ENCODE measurements at regions of chr2 and their contacts with region 1.

Region 1: GRCh38 chr2:241102239-241102803 is at the start of gene MTERF4:
- DNase-seq: no peak
- ATAC-seq: peak; percentile 82
- H3K4me3 ChIP-seq: peak within 1 kb of the TSS; percentile 80
- H3K27ac ChIP-seq: peak within 1 kb of the TSS; percentile 90
- H3K4me1 ChIP-seq: peaks cover 31% of the 10 kb centered on the region
- H3K27me3 ChIP-seq: no peaks in the 10 kb centered on the region
- CTCF ChIP-seq: no peak
- EP300 ChIP-seq: peak; percentile 41 to 56; a peak in 1 of 4 replicates
- POLR2A ChIP-seq: peak; percentile 94
- RAD21 ChIP-seq: peak; percentile 16; the same call in 1 of the 2 replicates
- polyA plus RNA-seq, gene MTERF4: 36.7 to 45.0 TPM

Region 2: DNA sequence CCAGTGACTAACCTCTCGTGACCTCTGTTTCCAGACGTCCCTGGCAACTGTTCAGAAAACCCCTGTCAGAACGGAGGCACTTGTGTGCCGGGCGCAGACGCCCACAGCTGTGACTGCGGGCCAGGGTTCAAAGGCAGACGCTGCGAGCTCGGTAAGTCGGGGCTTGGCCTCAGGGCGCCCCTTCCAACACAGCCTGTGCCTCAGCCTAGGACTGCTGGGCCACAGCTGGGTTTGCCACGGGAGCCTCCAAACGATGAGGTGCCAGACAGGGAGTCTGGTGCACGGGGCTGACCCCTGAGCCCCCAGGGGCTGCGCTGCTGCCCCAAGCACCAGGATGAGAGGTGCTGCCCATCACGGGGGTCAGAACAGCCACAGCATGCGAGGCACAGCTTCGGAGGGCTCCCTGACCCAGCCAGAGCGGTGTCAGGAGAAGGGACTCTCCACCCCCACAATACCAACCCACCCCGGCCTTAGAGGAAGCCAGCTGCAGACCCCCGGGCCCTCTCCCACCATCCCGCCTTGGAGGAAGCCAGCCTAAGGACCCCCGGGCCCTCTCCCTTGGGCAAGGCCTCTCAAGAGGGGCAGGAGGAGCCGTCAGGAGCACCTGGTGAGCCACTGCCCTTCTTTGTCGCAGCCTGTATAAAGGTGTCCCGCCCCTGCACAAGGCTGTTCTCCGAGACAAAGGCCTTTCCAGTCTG is 20.5 kb before region 1 on chr2:
- CTCF ChIA-PET with region 1: interaction called, 14 read pairs
- POLR2A ChIA-PET with region 1: interaction called, 3 read pairs
- RAD21 ChIA-PET with region 1: interaction called, 3 read pairs
- SMC1A ChIA-PET with region 1: interaction called, 12 read pairs
- in situ Hi-C with region 1: no loop called
- intact Hi-C with region 1: no loop called
- DNase-seq: no peak
- ATAC-seq: no peak
- H3K4me3 ChIP-seq: no peak overlapping the region
- H3K27ac ChIP-seq: no peak overlapping the region
- H3K4me1 ChIP-seq: no peaks in the 10 kb centered on the region; the same call in 1 of the 2 replicates
- H3K27me3 ChIP-seq: no peaks in the 10 kb centered on the region
- CTCF ChIP-seq: no peak
- EP300 ChIP-seq: no peak
- POLR2A ChIP-seq: 0 out of 2 replicates have a peak, but pooled peaks have one; percentile 16
- RAD21 ChIP-seq: no peak

Region 3: DNA sequence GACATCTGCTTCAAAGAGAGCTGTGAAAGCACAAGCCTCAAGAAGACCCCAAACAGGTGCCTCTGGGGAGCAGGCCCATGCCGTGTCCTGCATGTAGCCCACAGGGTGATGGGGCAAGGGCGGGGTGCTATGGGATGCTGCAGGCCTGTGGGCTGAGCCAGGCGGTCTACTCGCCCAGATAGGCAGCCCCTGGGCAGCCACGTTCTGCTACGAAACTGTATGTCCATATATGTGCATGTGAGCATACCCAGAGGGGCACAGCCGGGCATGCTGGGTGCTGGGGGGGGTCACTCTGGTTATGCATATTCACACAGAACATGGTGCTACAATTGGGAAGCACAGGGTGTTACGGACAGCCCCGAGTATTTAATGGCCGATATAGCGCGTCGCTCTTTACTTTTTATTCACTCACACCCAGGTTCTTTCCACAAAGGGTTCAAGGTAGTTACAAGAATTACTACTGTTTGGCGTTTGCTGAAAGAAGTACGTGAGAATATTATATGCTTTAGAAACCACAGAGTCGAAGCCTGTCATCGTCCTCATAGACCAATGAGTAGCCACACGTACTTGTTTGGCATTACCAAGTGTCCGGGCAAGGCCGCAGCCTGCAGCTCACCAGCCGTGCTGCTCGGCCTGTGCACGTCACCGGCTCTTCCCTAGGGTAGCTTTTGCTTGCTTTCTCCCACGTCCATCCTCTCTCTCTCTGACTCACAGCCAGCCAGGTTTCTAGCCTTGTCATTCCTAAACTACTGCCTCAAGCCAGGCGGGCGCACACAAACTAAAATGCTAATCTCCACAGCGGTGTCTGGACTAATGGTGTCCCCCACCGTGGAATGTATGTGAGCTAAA is 14.7 kb before region 1 on chr2:
- CTCF ChIA-PET with region 1: interaction called, 4 read pairs
- POLR2A ChIA-PET with region 1: interaction called, 22 read pairs
- RAD21 ChIA-PET with region 1: interaction called, 7 read pairs
- SMC1A ChIA-PET with region 1: interaction called, 12 read pairs
- in situ Hi-C with region 1: no loop called
- intact Hi-C with region 1: loop called (anchors 1 kb)
- DNase-seq: peak; percentile 78
- ATAC-seq: peak; percentile 88
- H3K4me3 ChIP-seq: no peak overlapping the region
- H3K27ac ChIP-seq: peak overlapping the region; percentile 88
- H3K4me1 ChIP-seq: peaks cover 19% of the 10 kb centered on the region
- H3K27me3 ChIP-seq: no peaks in the 10 kb centered on the region
- CTCF ChIP-seq: no peak
- EP300 ChIP-seq: peak; percentile 78 to 92; a peak in 3 of 4 replicates
- POLR2A ChIP-seq: no peak; the same call in 1 of the 2 replicates
- RAD21 ChIP-seq: no peak

Region 4: GRCh38 chr2:241123816-241124536 is 21.7 kb after region 1 on chr2:
- CTCF ChIA-PET with region 1: interaction called, 3 read pairs
- POLR2A ChIA-PET with region 1: interaction called, 10 read pairs
- RAD21 ChIA-PET with region 1: interaction called, 11 read pairs
- SMC1A ChIA-PET with region 1: interaction called, 4 read pairs
- in situ Hi-C with region 1: no loop called
- intact Hi-C with region 1: loop called (anchors 1 kb)
- DNase-seq: no peak
- ATAC-seq: no peak
- H3K4me3 ChIP-seq: no peak overlapping the region
- H3K27ac ChIP-seq: no peak overlapping the region
- H3K4me1 ChIP-seq: peaks cover 35% of the 10 kb centered on the region
- H3K27me3 ChIP-seq: no peaks in the 10 kb centered on the region
- CTCF ChIP-seq: no peak
- EP300 ChIP-seq: no peak
- POLR2A ChIP-seq: no peak
- RAD21 ChIP-seq: no peak

Region 5: GRCh38 chr2:241129086-241129871 is 27.0 kb after region 1 on chr2:
- CTCF ChIA-PET with region 1: interaction called, 3 read pairs
- POLR2A ChIA-PET with region 1: interaction called, 10 read pairs
- RAD21 ChIA-PET with region 1: interaction called, 11 read pairs
- SMC1A ChIA-PET with region 1: interaction called, 4 read pairs
- in situ Hi-C with region 1: no loop called
- intact Hi-C with region 1: loop called (anchors 1 kb)
- DNase-seq: no peak
- ATAC-seq: peak; percentile 32
- H3K4me3 ChIP-seq: no peak overlapping the region
- H3K27ac ChIP-seq: peak overlapping the region; percentile 97
- H3K4me1 ChIP-seq: peaks cover 43% of the 10 kb centered on the region
- H3K27me3 ChIP-seq: no peaks in the 10 kb centered on the region
- CTCF ChIP-seq: no peak
- EP300 ChIP-seq: no peak
- POLR2A ChIP-seq: no peak; the same call in 1 of the 2 replicates
- RAD21 ChIP-seq: no peak

Region 6: DNA sequence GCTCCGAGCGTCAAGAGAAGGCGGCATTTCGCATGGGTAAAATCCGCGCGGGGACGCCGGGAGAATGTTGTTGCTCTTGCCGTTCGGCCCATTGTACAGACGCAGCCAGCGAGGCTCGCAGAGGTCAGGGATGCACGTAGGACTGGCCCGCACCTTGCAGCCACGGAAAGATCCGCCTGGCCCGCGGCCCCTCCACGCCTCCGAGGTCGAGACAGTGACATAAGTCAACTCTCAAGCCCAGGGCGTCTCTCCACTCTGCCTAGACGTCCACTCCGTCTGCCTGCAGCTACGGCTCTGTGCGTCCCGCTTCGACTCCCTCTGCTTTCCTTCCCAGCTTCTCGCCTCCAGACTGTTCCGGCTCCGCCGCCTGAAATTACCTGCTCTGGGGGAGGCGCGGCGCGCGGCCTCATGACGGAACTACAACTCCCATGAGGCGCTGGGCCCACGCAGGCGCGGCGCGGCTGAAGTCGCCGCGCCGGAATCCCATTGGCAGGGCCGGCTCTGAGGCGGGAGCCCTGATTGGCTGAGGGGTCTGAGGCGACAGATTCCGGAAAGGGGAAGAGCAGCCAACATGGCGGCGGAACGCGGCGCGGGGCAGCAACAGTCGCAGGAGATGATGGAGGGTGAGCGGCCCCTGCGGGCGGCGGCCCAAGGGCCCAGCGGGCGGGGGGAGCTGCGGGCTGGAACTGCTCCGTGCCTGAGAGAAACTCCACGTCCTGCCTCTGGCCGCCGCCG is 47.8 kb after region 1 on chr2 and contains the start of gene PPP1R7:
- CTCF ChIA-PET with region 1: interaction called, 4 read pairs
- POLR2A ChIA-PET with region 1: interaction called, 14 read pairs
- RAD21 ChIA-PET with region 1: interaction called, 62 read pairs
- SMC1A ChIA-PET with region 1: interaction called, 25 read pairs
- in situ Hi-C with region 1: no loop called
- intact Hi-C with region 1: loop called (anchors 5 kb)
- DNase-seq: peak; percentile 76
- ATAC-seq: peak; percentile 88
- H3K4me3 ChIP-seq: peak within 1 kb of the TSS; percentile 74
- H3K27ac ChIP-seq: peak within 1 kb of the TSS; percentile 65
- H3K4me1 ChIP-seq: peaks cover 23% of the 10 kb centered on the region
- H3K27me3 ChIP-seq: no peaks in the 10 kb centered on the region
- CTCF ChIP-seq: peak; percentile 33 to 57 (median 42); a peak in 5 of 6 replicates
- EP300 ChIP-seq: no peak
- POLR2A ChIP-seq: peak; percentile 91
- RAD21 ChIP-seq: peak; percentile 63
- polyA plus RNA-seq, gene PPP1R7: 81.4 to 82.8 TPM

Region 7: DNA sequence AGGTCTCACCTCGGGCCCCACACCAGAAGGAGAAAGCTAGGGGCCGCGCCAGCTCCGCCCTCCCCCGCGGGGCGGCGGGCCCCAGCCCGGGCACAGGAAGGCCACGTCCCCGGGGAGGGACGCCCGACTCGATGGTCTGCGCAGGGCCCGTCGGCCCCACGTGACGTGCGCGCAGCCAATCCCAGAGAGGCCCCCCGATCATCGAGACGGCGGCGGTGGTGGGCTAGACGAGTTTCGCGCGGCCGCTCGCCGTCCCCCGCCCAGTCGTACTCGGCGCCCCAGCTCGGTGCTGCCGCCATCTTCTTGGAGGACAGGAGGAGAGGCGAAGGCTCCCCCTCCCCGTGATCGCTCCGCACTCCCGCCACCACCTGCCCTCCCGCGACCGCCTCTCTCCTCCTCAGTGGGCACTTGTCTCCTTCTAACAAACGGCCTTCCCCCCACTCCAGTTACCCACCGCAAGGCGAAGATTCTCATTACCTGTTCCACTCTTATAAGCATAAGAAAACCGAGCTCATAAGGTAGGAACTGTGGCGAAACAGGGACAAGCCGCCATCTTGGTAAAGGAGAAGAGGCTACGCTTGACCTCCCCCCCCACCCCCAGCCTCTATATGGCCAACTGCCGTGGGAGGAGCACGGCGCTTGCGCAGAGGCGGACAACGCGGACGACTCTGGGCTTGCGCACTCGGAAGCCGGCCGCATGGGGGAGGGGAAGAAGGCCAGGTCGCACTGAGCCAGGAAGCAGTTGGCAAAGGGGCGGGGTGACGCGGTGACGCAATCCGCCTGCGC is 213.0 kb after region 1 on chr2 and contains the start of gene HDLBP:
- CTCF ChIA-PET with region 1: no interaction called
- POLR2A ChIA-PET with region 1: interaction called, 3 read pairs
- RAD21 ChIA-PET with region 1: interaction called, 3 read pairs
- SMC1A ChIA-PET with region 1: no interaction called
- in situ Hi-C with region 1: no loop called
- intact Hi-C with region 1: loop called (anchors 5 kb)
- DNase-seq: peak; percentile 96
- ATAC-seq: peak; percentile 80
- H3K4me3 ChIP-seq: peak within 1 kb of the TSS; percentile 90
- H3K27ac ChIP-seq: peak within 1 kb of the TSS; percentile 95
- H3K4me1 ChIP-seq: peaks cover 17% of the 10 kb centered on the region
- H3K27me3 ChIP-seq: no peaks in the 10 kb centered on the region
- CTCF ChIP-seq: peak; percentile 12 to 39 (median 25); a peak in 4 of 6 replicates
- EP300 ChIP-seq: peak; percentile 28 to 30; a peak in 2 of 4 replicates
- POLR2A ChIP-seq: peak; percentile 84
- RAD21 ChIP-seq: 0 out of 2 replicates have a peak, but pooled peaks have one; percentile 4
- polyA plus RNA-seq, gene HDLBP: 19.5 to 56.8 TPM

Measured in GM12878 (cell line).